Activated CD8-positive, alpha-beta T cell treated with anti-CD3 and anti-CD28 coated beads for 36 hours (primary cell): ENCODE measurements at regions of chr17 and their contacts with region 1.

Region 1: DNA sequence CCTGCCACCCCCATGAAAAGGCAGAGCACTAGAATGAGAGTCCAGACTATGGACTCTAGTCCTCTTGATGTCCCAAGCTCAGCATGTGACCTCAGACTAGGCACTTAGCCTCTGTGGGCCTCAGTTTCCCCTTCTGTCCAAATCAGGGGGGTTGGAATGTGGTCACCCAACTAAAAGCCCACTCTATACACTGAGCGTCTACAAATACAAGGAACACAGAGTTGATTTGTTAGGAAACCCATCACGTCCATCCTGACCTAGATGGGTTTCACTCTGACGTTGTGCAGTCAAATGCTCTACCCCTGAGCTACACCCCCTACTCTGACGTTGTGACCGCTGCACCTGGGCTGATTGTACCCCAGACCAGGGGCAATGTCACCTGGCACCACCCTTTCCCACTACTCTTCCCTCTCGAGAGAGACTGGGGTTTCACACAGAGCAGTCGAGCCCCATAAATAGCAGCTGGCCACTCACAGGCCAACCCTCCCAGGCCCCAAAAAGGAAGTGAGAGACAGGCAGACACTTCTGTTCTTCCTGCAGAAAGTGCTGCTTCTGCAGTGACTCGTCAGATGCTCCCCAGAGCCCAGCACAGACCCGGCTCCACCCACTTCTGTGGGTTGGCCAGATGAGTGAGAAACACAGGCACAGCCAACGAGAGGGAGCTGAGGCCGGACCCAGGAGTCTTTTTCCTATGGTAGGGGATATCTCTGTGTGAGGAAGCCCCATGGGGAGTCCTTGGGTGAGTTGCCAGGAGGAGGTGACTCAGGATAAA is 16.1 kb upstream of the TNFRSF13B start:
- DNase-seq: peak; percentile 81
- ATAC-seq: peak; percentile 88
- H3K4me3 Mint-ChIP-seq: peak overlapping the region; percentile 46
- H3K27ac Mint-ChIP-seq: peak overlapping the region; percentile 93
- H3K4me1 Mint-ChIP-seq: peaks cover 30% of the 10 kb centered on the region
- H3K27me3 Mint-ChIP-seq: no peaks in the 10 kb centered on the region
- CTCF ChIP-seq: no peak

Region 2: DNA sequence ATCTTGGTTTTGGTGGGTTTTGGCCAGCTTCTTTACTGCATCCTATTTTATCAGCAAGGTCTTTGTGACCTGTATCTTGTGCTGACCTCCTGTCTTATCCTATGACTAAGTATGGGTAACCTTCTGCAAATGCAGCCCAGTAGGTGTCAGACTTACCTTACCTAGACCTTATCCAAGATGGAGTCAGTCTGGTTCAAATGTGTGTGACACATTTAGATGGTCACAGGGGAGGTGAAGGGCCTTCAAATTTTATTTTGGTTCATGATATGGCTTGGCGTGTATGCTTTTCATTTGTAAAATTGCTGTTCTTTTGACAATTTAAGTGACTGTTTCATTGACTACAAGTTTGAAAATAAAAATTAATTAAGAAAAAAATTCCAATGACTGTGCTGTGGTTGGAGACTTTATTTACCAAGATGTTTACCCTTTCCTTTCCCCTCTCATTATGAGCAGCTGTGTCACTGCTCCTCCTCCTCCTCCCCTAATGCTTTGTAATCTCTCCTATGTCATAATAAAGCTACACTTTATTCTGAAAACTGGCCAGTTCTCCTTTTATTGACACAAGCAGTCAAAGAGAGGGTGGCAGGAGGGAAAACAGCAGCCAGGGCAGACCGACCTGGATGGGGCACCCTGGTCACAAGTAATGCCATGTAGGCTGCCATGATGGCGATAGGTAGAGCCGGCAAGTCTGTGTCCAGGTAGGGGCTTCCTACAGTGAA is 65.5 kb before region 1 on chr17:
- CTCF ChIA-PET with region 1: interaction called, 7 read pairs
- POLR2A ChIA-PET with region 1: no interaction called
- intact Hi-C with region 1: loop called (anchors 10 kb)
- DNase-seq: peak; percentile 20
- ATAC-seq: peak; percentile 55
- H3K4me3 Mint-ChIP-seq: no peak overlapping the region
- H3K27ac Mint-ChIP-seq: no peak overlapping the region
- H3K4me1 Mint-ChIP-seq: no peaks in the 10 kb centered on the region
- H3K27me3 Mint-ChIP-seq: no peaks in the 10 kb centered on the region
- CTCF ChIP-seq: no peak

Region 3: DNA sequence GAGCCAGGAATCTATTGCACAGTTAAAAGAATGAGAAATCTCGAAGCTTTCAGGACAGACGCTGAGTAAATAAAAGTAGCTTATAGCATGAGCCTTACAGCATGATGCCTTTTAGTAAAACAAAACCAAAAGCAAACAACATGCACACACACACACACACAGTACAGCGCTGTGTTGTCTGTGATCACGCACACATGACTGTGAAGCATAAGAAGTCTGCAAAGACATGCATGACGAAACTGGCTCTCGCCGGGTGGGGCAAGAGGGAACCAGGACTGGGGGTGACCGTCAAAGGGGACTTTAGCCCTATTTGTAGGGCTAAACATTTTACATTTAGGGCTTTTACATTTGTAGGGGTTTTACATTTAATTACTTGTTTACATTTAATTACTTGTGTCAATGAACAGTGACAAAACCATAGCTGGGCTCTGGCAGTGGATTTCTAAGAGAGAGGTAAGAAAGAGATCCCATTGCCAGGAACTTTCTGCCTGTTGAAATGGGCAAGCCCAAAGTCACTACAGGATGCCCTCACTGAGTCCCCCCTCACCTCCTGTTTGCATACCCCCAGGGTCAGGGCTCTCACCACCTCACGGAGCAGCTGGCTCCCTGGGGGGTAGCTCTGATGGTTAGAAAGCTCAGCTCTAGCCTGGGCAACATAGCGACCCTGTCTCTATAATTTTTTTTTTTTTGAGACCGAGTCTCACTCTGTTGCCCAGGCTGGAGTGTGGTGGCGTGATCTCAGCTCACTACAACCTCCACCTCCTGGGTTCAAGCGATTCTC is 14.1 kb before region 1 on chr17:
- CTCF ChIA-PET with region 1: interaction called, 11 read pairs
- POLR2A ChIA-PET with region 1: interaction called, 5 read pairs
- intact Hi-C with region 1: no loop called
- DNase-seq: no peak
- ATAC-seq: no peak
- H3K4me3 Mint-ChIP-seq: no peak overlapping the region
- H3K27ac Mint-ChIP-seq: no peak overlapping the region
- H3K4me1 Mint-ChIP-seq: peaks cover 15% of the 10 kb centered on the region
- H3K27me3 Mint-ChIP-seq: peaks cover 2% of the 10 kb centered on the region
- CTCF ChIP-seq: no peak

Region 4: GRCh38 chr17:17242081-17242645 is 254.1 kb after region 1 on chr17:
- CTCF ChIA-PET with region 1: no interaction called
- POLR2A ChIA-PET with region 1: no interaction called
- intact Hi-C with region 1: no loop called
- DNase-seq: no peak
- ATAC-seq: no peak
- H3K4me3 Mint-ChIP-seq: no peak overlapping the region
- H3K27ac Mint-ChIP-seq: no peak overlapping the region
- H3K4me1 Mint-ChIP-seq: peaks cover 21% of the 10 kb centered on the region
- H3K27me3 Mint-ChIP-seq: no peaks in the 10 kb centered on the region
- CTCF ChIP-seq: no peak

Region 5: GRCh38 chr17:17303010-17303846 is 315.2 kb after region 1 on chr17 and contains the start of gene NT5M:
- CTCF ChIA-PET with region 1: no interaction called
- POLR2A ChIA-PET with region 1: no interaction called
- intact Hi-C with region 1: loop called (anchors 10 kb)
- DNase-seq: peak; percentile 82
- ATAC-seq: peak; percentile 64
- H3K4me3 Mint-ChIP-seq: peak within 1 kb of the TSS; percentile 79
- H3K27ac Mint-ChIP-seq: peak within 1 kb of the TSS; percentile 85
- H3K4me1 Mint-ChIP-seq: peaks cover 42% of the 10 kb centered on the region
- H3K27me3 Mint-ChIP-seq: no peaks in the 10 kb centered on the region
- CTCF ChIP-seq: no peak
- total RNA-seq, gene NT5M: 8.3 to 9.4 TPM